ENCODE measurements at regions of chr6 and their contacts with region 1.

Region 1: GRCh38 chr6:166775180-166776081 is 148.4 kb upstream of the RPS6KA2 start:
- DNase-seq: peak; percentile 53 to 66
- ATAC-seq: peak; percentile 74 to 87; a peak in 5 of 6 replicates
- H3K4me3 ChIP-seq: no peak overlapping the region
- H3K27ac ChIP-seq: no peak overlapping the region
- H3K4me1 ChIP-seq: no peaks in the 10 kb centered on the region
- CTCF ChIP-seq: peak; percentile 77
- EP300 ChIP-seq: no peak
- POLR2A ChIP-seq: no peak
- RAD21 ChIP-seq: peak; percentile 63 to 80

Region 2: GRCh38 chr6:166761801-166762200 is 13.6 kb before region 1 on chr6:
- CTCF ChIA-PET with region 1: interaction called, 33 read pairs
- POLR2A ChIA-PET with region 1: no interaction called
- DNase-seq: no peak
- ATAC-seq: no peak
- H3K4me3 ChIP-seq: no peak overlapping the region
- H3K27ac ChIP-seq: no peak overlapping the region
- H3K4me1 ChIP-seq: no peaks in the 10 kb centered on the region
- CTCF ChIP-seq: no peak
- EP300 ChIP-seq: no peak
- POLR2A ChIP-seq: no peak
- RAD21 ChIP-seq: no peak

Region 3: DNA sequence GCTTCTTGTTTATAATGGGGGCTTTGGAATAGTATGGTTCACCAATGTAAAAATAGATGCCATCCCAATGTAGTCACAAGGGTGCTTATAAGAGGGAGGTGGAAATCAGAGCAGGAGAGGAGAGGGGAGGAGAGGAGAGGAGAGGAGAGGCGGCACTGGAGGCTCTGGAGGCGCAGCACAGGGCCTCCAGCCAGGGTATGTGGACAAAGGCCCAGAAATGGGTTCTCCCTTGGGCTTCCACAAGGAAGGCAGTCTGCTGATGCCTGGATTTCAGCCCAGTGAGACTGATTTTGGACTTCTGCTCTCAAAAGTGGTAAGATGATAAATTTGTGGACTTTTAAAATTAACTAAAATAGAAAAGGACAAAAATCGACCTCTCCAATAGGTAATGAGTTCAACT is 64.1 kb after region 1 on chr6:
- CTCF ChIA-PET with region 1: no interaction called
- POLR2A ChIA-PET with region 1: no interaction called
- DNase-seq: no peak
- ATAC-seq: no peak
- H3K4me3 ChIP-seq: no peak overlapping the region
- H3K27ac ChIP-seq: no peak overlapping the region
- H3K4me1 ChIP-seq: no peaks in the 10 kb centered on the region
- CTCF ChIP-seq: no peak
- EP300 ChIP-seq: no peak
- POLR2A ChIP-seq: no peak
- RAD21 ChIP-seq: no peak

Region 4: DNA sequence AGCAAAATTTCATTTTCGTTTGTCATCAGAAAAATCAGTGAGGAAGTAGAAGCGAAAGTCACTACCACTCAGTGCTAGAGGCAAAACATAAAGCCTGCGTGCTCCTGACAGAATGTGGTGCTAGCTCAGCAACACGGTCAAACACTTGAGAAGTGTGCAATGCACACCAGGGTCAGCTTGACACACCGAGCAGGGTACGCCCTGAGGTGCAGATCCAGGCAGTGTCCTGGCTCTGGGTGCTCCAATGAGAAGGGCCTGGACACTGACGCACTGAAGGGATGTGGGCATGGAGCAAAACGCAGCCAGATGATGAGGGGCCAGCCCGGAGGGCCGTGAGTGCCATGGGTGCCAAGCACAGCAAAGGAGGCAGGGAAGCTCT is 175.0 kb after region 1 on chr6:
- CTCF ChIA-PET with region 1: interaction called, 13 read pairs
- POLR2A ChIA-PET with region 1: no interaction called
- DNase-seq: no peak
- ATAC-seq: no peak
- H3K4me3 ChIP-seq: no peak overlapping the region
- H3K27ac ChIP-seq: no peak overlapping the region
- H3K4me1 ChIP-seq: no peaks in the 10 kb centered on the region
- CTCF ChIP-seq: no peak
- EP300 ChIP-seq: no peak
- POLR2A ChIP-seq: no peak
- RAD21 ChIP-seq: no peak

Region 5: GRCh38 chr6:166989427-166990032 is 214.1 kb after region 1 on chr6:
- CTCF ChIA-PET with region 1: interaction called, 50 read pairs
- POLR2A ChIA-PET with region 1: no interaction called
- DNase-seq: peak in 1 of 2 experiments; percentile 23
- ATAC-seq: peak; percentile 34 to 66; a peak in 3 of 6 replicates
- H3K4me3 ChIP-seq: no peak overlapping the region
- H3K27ac ChIP-seq: no peak overlapping the region
- H3K4me1 ChIP-seq: peaks cover 4% of the 10 kb centered on the region; the same call in 1 of the 3 replicates
- CTCF ChIP-seq: peak; percentile 49
- EP300 ChIP-seq: no peak
- POLR2A ChIP-seq: no peak
- RAD21 ChIP-seq: peak; percentile 42 to 44; a peak in 3 of 5 replicates

Measured in A549 (cell line).